SK-N-SH (cell line): ENCODE measurements at regions of chr18 and their contacts with region 1.

Region 1: DNA sequence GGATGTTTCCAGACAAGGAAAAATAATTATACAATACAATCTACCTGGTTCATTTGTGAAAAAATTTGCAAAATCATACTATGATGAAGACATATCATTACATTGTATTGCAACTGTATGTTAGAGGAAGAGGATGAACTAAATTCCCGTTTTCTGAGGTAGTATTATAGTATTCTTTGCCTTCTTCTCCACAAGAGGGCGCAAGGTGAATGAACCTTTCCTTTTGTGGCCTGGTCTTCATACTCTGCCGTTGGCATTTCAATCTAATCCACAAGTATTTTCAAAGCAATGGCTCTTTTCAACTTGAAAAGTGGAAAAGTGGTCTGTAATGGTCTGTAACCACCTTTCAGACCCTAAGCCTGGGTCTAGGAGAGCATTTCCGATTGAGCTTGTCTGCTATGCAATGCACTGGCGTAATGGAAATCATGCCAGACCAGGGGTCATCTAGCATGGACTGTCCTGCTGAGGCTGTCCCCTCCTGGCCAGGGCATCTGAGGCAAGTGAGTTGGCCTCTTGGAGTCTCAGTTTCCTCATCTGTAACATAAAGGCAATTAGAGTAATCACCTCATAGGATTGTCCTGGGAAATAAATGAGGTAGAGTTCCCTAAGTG is 30.8 kb upstream of the ZNF396 start:
- DNase-seq: peak; percentile 62
- H3K4me3 ChIP-seq: no peak overlapping the region; a peak in 1 of 4 replicates
- H3K27ac ChIP-seq: no peak overlapping the region
- H3K4me1 ChIP-seq: no peaks in the 10 kb centered on the region
- H3K27me3 ChIP-seq: no peaks in the 10 kb centered on the region
- CTCF ChIP-seq: peak; percentile 87
- EP300 ChIP-seq: no peak
- RAD21 ChIP-seq: peak; percentile 83

Region 2: GRCh38 chr18:35379420-35379819 is 28.6 kb before region 1 on chr18:
- CTCF ChIA-PET with region 1: interaction called, 10 read pairs
- POLR2A ChIA-PET with region 1: no interaction called
- DNase-seq: no peak
- H3K4me3 ChIP-seq: no peak overlapping the region
- H3K27ac ChIP-seq: no peak overlapping the region
- H3K4me1 ChIP-seq: peaks cover 0 to 5% of the 10 kb centered on the region in 2 experiments; a peak in 1 of 4 replicates
- H3K27me3 ChIP-seq: peaks cover 6% of the 10 kb centered on the region; the same call in 1 of the 2 replicates
- CTCF ChIP-seq: no peak
- EP300 ChIP-seq: no peak
- RAD21 ChIP-seq: no peak

Region 3: GRCh38 chr18:35397976-35398375 is 10.0 kb before region 1 on chr18:
- CTCF ChIA-PET with region 1: interaction called, 12 read pairs
- POLR2A ChIA-PET with region 1: no interaction called
- DNase-seq: no peak
- H3K4me3 ChIP-seq: no peak overlapping the region
- H3K27ac ChIP-seq: no peak overlapping the region
- H3K4me1 ChIP-seq: no peaks in the 10 kb centered on the region
- H3K27me3 ChIP-seq: no peaks in the 10 kb centered on the region; the same call in 1 of the 2 replicates
- CTCF ChIP-seq: no peak
- EP300 ChIP-seq: no peak
- RAD21 ChIP-seq: no peak

Region 4: GRCh38 chr18:35422237-35422636 is 14.3 kb after region 1 on chr18:
- CTCF ChIA-PET with region 1: interaction called, 10 read pairs
- POLR2A ChIA-PET with region 1: no interaction called
- DNase-seq: no peak
- H3K4me3 ChIP-seq: no peak overlapping the region
- H3K27ac ChIP-seq: no peak overlapping the region
- H3K4me1 ChIP-seq: no peaks in the 10 kb centered on the region
- H3K27me3 ChIP-seq: no peaks in the 10 kb centered on the region
- CTCF ChIP-seq: no peak
- EP300 ChIP-seq: no peak
- RAD21 ChIP-seq: no peak